Activated CD4-positive, alpha-beta T cell treated with anti-CD3 and anti-CD28 coated beads for 36 hours (primary cell): ENCODE measurements at regions of chr2 and their contacts with region 1.

Region 1: GRCh38 chr2:11203480-11203879 is 48.2 kb downstream of the SLC66A3 start:
- DNase-seq: no peak
- ATAC-seq: peak; percentile 92
- H3K4me3 Mint-ChIP-seq: no peak overlapping the region
- H3K27ac Mint-ChIP-seq: peak overlapping the region; percentile 19
- H3K4me1 Mint-ChIP-seq: peaks cover 15% of the 10 kb centered on the region
- H3K27me3 Mint-ChIP-seq: no peaks in the 10 kb centered on the region

Region 2: DNA sequence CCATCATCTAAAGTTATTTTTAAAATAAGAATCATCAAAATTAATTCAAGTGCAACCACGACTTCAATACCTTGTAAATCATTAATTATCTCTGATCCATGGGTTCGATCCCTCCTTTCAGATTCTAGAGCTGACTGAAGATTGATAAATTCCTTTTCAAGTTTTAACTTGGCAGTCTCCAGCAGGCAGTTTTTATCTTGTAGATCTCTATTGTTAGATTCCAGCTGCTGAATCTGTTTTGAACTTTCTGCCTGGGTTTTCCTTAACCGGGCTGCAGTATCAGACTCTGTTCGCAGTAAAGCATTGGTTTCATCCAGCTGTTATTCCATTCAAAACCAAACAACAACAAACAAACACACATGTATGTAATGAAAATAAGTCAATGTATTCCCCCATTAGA is 11.3 kb after region 1 on chr2:
- CTCF ChIA-PET with region 1: interaction called, 6 read pairs
- POLR2A ChIA-PET with region 1: no interaction called
- intact Hi-C with region 1: loop called in 1 of 2 experiments (anchors 2 kb)
- DNase-seq: no peak
- ATAC-seq: no peak
- H3K4me3 Mint-ChIP-seq: no peak overlapping the region
- H3K27ac Mint-ChIP-seq: no peak overlapping the region
- H3K4me1 Mint-ChIP-seq: no peaks in the 10 kb centered on the region
- H3K27me3 Mint-ChIP-seq: no peaks in the 10 kb centered on the region